ENCODE measurements at regions of chr14 and their contacts with region 1.

Region 1: GRCh38 chr14:90301668-90302090 is 30.1 kb downstream of the NRDE2 start:
- DNase-seq: no peak
- ATAC-seq: peak in 7 of 8 donors; percentile 37 to 84 (median 70)
- H3K4me3 ChIP-seq: no peak overlapping the region
- H3K27ac ChIP-seq: peak overlapping the region in 9 of 10 donors; percentile 4 to 74 (median 56)
- H3K4me1 ChIP-seq: peaks cover 5 to 45% (median 22%) of the 10 kb centered on the region in 9 donors
- H3K27me3 ChIP-seq: no peaks in the 10 kb centered on the region
- CTCF ChIP-seq: peak; percentile 20 to 75 (median 58)

Region 2: DNA sequence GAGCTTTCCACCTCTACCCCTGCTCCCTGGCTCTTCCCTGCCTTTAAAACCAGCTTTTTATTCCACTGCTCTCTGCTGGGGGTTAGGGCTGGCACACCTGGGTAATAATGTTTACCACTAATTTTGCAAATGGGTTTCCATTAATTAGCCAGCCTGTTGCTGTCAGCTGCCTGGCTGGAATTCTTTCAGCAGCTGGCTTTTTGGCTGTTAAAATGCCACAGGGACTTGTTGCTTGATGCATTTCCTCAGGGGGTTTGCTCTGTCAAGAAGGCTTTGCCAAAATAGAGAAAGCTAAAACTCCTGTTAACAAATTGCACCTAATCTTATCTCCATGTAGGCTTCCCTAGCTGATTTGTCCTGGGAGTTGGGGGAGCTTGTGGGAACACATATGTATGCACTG is 97.2 kb before region 1 on chr14:
- intact Hi-C with region 1: no loop called
- DNase-seq: no peak
- ATAC-seq: no peak
- H3K4me3 ChIP-seq: no peak overlapping the region
- H3K27ac ChIP-seq: no peak overlapping the region
- H3K4me1 ChIP-seq: no peaks in the 10 kb centered on the region
- H3K27me3 ChIP-seq: peaks cover 0 to 9% (median 0%) of the 10 kb centered on the region in 7 donors
- CTCF ChIP-seq: no peak

Region 3: GRCh38 chr14:90815822-90816700 is 514.4 kb after region 1 on chr14 and contains the start of gene TTC7B:
- intact Hi-C with region 1: loop called in 2 of 10 experiments (anchors 5 to 10 kb)
- DNase-seq: peak in 1 of 2 donors; percentile 65
- ATAC-seq: peak; percentile 69 to 85 (median 78)
- H3K4me3 ChIP-seq: peak within 1 kb of the TSS; percentile 63 to 91 (median 77)
- H3K27ac ChIP-seq: peak within 1 kb of the TSS in 6 of 10 donors; percentile 30 to 58 (median 50)
- H3K4me1 ChIP-seq: peaks cover 3 to 35% (median 18%) of the 10 kb centered on the region in 9 donors
- H3K27me3 ChIP-seq: no peaks in the 10 kb centered on the region
- CTCF ChIP-seq: peak in 8 of 9 donors; percentile 5 to 42 (median 24)
- total RNA-seq, gene TTC7B: 59.1 to 79.4 (median 66.6) TPM

Region 4: DNA sequence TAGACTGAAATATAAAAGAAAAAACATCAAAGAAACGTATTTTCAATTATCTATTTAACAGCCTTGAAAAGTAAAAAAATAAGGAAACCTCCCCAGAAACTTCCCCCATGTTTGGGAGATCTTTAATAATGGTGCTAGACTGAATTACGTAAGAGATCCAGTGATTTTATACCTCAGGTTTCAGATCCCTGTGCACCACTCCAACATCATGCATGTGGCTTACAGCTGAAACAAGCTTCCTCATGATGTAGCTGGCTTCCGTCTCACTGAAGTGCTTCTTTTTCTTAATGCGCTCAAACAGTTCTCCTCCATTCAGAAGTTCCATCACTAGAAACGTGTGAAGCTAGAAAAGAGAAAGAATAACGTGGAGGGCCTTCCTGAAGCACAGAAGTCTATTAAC is 592.6 kb after region 1 on chr14:
- intact Hi-C with region 1: loop called in 2 of 10 experiments (anchors 10 kb)
- DNase-seq: no peak
- ATAC-seq: no peak
- H3K4me3 ChIP-seq: no peak overlapping the region
- H3K27ac ChIP-seq: no peak overlapping the region
- H3K4me1 ChIP-seq: peaks cover 0 to 19% (median 5%) of the 10 kb centered on the region in 9 donors
- H3K27me3 ChIP-seq: no peaks in the 10 kb centered on the region
- CTCF ChIP-seq: no peak

Region 5: DNA sequence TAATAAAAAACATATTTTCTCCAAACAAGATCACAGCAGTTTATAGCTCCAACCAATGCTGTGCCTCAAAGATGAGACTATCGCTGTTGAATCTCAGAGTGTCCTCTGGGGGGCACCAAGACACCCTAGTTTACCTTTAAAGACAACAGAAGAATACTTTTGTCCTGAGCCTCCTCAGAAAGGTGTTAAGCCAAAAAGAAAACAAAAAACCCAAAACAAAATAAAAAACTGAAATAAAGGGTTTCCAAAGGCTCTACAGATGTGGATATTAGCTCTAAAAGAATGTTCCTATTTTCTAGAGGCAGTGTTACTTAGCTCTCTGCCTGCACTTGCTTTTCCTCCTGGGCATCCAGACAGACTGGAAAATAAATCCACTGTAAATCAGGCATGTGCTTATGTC is 601.4 kb after region 1 on chr14:
- intact Hi-C with region 1: loop called in 3 of 10 experiments (anchors 5 to 10 kb)
- DNase-seq: peak in 1 of 2 donors; percentile 58
- ATAC-seq: peak in 7 of 8 donors; percentile 72 to 88 (median 81)
- H3K4me3 ChIP-seq: no peak overlapping the region
- H3K27ac ChIP-seq: no peak overlapping the region
- H3K4me1 ChIP-seq: no peaks in the 10 kb centered on the region
- H3K27me3 ChIP-seq: no peaks in the 10 kb centered on the region
- CTCF ChIP-seq: peak; percentile 29 to 84 (median 74)